Sciatic nerve (tissue), 2 donors: ENCODE measurements at regions of chr2 and their contacts with region 1.

Region 1: GRCh38 chr2:120564213-120565094 is 171.2 kb upstream of the GLI2 start:
- DNase-seq: no peak
- ATAC-seq: no peak

Region 2: DNA sequence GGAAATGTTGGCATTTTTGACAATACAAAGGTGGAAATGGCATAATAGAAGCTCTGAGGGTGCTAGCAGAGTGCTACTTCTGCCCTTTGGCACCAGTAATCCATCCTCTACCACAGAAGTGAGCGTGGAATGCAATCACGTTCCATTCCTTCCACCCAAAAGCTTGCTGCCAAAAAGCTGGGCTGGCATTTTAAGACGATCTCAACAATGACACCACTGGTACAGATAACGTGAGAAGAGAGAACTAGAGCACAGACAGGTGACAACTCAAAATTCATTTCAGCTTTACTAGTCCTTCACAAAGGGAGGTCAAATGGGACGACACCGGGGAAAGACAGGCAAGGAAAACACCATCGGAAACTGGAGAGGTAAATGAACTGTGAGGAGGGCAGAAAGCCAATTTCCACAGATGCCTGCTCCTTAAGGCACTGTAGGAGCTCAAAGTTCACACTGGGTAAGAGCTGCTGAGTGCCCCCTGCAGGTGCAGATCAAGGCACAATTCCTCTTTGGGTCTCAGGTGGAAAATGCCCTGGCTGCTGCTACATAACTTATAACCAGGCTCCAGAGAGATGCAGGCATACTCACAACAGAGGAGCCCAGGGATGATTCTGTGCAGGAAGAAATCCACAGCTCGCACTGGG is 915.5 kb after region 1 on chr2:
- intact Hi-C with region 1: loop called (anchors 5 kb)
- DNase-seq: no peak
- ATAC-seq: peak; percentile 58